Heart right ventricle (tissue), 16 donors: ENCODE measurements at regions of chr21 and their contacts with region 1.

Region 1: GRCh38 chr21:32021319-32021994 is 148.6 kb downstream of the HUNK start:
- DNase-seq: peak; percentile 75 to 78
- ATAC-seq: peak; percentile 79 to 98 (median 96)
- H3K4me3 ChIP-seq: no peak overlapping the region
- H3K27ac ChIP-seq: peak overlapping the region in 6 of 10 donors; percentile 6 to 41 (median 35)
- H3K4me1 ChIP-seq: peaks cover 0 to 15% (median 7%) of the 10 kb centered on the region in 9 donors
- H3K27me3 ChIP-seq: no peaks in the 10 kb centered on the region
- CTCF ChIP-seq: no peak

Region 2: DNA sequence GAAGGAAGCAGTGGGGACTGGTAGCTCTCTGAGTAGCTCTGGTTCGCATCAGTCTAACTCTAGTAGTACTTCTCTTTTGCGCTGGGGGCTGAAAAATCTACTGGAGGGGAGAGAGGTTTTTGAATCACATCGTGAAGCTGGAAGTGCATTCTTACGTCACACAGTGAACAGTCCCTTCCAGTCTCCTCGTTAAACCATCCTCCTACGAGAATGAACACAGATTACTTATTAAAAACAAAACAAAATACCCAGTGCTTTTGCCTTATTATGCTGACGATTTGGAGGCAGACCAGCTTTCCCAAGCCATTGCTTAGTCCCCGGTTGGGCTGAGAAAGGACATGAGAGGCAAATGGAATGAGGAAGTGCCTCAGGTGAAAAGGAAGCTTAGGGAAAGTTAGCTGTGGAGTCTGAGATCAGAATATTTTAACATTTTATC is 132.5 kb before region 1 on chr21:
- intact Hi-C with region 1: loop called in 1 of 10 experiments (anchors 10 kb)
- DNase-seq: no peak
- ATAC-seq: no peak
- H3K4me3 ChIP-seq: no peak overlapping the region
- H3K27ac ChIP-seq: no peak overlapping the region
- H3K4me1 ChIP-seq: no peaks in the 10 kb centered on the region
- H3K27me3 ChIP-seq: peaks cover 0 to 9% (median 0%) of the 10 kb centered on the region in 7 donors
- CTCF ChIP-seq: no peak

Region 3: DNA sequence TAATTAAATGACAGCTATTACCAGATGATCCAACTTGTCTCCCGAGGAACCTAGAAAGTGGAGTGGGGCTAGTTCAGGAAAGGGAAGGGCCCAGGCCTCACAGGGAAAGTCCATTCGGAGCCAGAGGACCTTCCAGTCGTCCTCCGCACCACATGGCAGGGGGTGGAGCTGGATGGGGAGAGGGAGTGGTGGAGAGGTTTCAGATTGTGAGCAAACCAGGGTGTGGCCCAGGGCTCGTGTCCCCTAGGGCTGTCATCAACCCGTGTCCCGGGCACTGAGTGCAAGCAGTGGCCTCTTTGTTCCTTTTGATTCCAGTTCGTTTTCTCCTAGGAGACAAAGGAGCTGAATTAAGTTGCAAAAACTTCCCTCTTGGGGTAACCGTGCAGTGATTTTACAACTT is 33.7 kb before region 1 on chr21:
- intact Hi-C with region 1: no loop called
- DNase-seq: peak in 1 of 2 donors; percentile 17
- ATAC-seq: peak in 3 of 8 donors; percentile 31 to 65 (median 57)
- H3K4me3 ChIP-seq: no peak overlapping the region
- H3K27ac ChIP-seq: no peak overlapping the region
- H3K4me1 ChIP-seq: no peaks in the 10 kb centered on the region
- H3K27me3 ChIP-seq: no peaks in the 10 kb centered on the region
- CTCF ChIP-seq: no peak